AG04449 (cell line): ENCODE measurements at regions of chr6 and their contacts with region 1.

Region 1: DNA sequence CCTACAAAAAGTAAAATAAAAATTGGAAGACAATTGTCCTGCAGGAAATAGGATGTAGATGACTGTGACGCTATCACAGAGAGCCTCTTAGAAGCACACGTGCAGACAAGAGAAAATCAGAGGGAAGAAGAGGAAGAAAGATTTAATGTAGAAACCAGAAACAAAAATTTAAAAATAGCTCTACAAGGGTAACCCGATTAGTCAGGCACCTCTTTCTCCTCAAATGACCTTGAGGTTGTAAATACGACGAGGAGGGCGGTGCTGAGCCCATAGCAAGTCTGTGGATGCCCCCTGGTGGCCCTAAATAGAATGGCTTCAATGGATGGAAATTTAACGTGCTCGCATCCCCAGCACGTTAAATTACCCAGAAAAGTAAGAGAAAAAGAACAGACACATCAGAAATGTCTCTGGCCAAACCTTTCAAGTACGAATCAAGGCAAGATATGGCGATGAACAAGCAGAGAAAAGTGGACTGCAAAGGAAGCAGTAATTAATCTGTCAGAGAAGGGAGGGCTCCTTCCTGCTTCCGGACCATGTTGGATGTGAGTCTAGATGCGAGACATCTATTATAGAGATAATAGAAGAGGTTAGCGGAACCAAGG is 4.2 kb upstream of the PRPH2 start:
- DNase-seq: peak; percentile 52
- H3K4me3 ChIP-seq: peak overlapping the region; percentile 34
- CTCF ChIP-seq: peak; percentile 81

Region 2: GRCh38 chr6:42674780-42675179 is 51.8 kb before region 1 on chr6:
- CTCF ChIA-PET with region 1: interaction called, 34 read pairs
- POLR2A ChIA-PET with region 1: no interaction called
- DNase-seq: no peak
- H3K4me3 ChIP-seq: no peak overlapping the region
- CTCF ChIP-seq: no peak

Region 3: GRCh38 chr6:42692137-42692911 is 34.3 kb before region 1 on chr6:
- CTCF ChIA-PET with region 1: interaction called, 83 read pairs
- POLR2A ChIA-PET with region 1: no interaction called
- DNase-seq: no peak
- H3K4me3 ChIP-seq: no peak overlapping the region
- CTCF ChIP-seq: no peak

Region 4: GRCh38 chr6:42714098-42714761 is 12.4 kb before region 1 on chr6:
- CTCF ChIA-PET with region 1: interaction called, 41 read pairs
- POLR2A ChIA-PET with region 1: no interaction called
- DNase-seq: no peak
- H3K4me3 ChIP-seq: no peak overlapping the region
- CTCF ChIP-seq: no peak

Region 5: DNA sequence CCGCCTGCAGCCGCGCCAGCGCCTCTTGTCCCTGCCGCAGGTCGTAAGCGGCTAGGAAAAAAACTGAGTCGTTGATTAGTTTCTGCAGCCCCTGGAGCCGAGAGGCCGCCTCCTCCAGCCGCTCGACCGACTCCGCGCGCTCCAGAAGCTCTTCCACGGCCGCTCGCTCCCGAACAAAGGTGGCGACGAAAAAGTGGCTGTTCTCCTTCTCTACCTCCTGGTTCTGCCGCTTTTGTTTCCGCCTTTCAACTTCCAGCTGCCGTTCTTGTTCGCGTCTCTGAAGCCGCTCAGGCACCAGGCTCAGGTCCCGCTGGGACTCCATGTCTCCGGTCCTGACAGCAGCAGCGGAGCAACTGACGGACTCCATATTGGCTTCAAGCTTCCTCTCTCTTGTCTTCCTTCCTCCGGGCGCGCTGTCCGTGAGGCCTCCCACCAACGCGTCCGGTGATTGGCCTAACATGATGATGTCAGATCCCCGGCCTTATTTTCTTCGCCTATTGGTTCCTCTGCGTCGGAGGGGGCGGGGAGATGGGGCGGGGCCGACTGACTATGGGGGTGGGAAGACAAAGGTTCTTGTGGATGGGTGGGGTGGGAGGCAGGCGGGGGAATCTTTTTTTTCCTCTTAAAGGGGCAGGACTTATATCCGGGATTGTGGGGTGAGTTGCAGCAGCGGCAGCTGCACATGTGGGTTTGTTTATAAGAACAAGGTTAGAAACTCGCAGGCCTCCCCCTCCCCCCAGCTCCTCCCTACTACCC is 19.3 kb after region 1 on chr6 and contains the start of gene TBCC:
- CTCF ChIA-PET with region 1: interaction called, 25 read pairs
- POLR2A ChIA-PET with region 1: interaction called, 5 read pairs
- DNase-seq: peak; percentile 95
- H3K4me3 ChIP-seq: peak within 1 kb of the TSS; percentile 99
- CTCF ChIP-seq: no peak

Region 6: GRCh38 chr6:42873313-42873712 is 146.7 kb after region 1 on chr6:
- CTCF ChIA-PET with region 1: interaction called, 34 read pairs
- POLR2A ChIA-PET with region 1: no interaction called
- DNase-seq: no peak
- H3K4me3 ChIP-seq: no peak overlapping the region
- CTCF ChIP-seq: no peak

Region 7: DNA sequence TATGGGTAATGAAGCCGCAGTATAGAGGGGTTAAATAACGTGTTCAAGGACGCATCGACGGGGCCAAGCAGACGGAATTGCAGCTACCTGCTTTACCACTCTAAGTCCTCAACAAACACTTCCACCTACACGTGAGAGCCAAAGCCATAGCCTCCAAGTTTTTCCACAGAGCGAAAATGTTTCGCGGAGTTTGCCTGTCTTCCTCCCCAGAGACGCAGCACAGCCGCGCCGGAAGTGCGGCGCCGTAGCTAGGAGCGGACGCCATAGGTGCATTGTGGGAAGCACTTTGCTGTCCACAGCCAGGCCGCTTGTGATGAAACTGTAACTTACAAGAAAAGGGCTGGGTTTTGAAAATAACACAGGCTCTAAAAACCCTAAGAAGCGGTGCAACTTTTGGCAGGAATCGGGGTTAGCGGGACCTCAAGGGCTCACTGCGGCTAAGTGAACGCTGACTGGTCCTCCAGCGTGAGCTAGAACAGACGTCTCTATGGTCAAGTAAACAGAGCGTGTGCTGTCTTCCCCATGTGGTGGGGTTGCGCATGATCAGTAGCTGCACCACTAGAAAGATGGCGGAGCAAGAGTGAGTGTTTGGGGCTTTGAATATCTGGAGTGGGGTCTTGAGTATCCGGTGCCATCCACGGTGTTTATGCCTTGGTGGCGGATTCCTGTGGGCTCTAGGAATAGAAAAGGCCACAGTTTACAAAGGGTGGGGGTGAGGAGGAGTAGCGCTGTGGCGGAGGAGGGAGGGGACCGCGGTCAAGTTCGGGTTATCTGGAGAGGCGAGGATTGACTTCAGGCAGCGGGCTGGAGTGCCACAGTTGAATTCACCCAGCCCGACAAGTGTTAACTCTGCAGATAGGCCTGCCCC is 153.0 kb after region 1 on chr6 and contains the start of gene RPL7L1:
- CTCF ChIA-PET with region 1: interaction called, 34 read pairs
- POLR2A ChIA-PET with region 1: interaction called, 3 read pairs
- DNase-seq: peak; percentile 38
- H3K4me3 ChIP-seq: peak within 1 kb of the TSS; percentile 83
- CTCF ChIP-seq: peak; percentile 1

Region 8: DNA sequence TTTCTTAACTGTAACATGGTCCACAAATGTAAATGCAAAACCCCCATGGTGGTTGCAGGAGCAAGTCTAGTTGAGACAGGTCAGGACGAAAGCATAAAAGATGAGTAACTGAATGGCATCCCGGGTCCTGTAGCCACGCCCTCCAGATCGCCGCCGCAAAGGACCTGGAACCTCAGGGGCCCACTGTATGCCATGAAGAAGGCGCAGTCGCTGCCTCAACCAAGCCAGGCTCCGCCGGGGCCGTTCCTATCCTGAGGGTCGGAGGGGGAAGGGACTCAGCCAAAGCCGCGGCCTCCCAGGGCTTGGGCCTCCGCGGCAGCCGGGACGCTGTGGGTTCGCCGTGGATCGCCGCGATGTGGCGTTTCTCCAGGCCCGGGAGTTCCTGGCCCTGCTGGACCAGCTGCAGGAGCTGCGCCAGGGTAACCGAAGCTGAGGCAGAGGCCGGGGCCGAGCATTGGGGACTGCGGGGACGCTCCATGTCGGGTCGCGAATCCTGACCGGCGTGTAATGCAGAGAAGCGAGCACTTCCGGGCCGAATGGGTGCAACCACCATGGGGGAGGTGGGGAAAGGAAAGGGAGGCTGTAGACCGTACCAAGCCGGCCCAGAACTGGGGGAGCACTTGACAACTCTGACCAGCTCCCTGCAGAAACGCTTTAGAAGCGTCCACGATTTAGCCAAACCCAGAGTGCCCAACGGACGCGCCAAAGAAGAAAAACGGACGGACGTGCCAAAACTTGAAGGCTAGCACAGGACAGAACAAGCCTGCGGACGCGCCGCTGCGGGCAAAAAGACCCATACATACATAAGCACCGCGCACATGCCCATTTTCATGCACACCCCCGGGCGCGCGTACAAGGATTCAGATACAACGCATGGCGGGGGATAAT is 164.0 kb after region 1 on chr6:
- CTCF ChIA-PET with region 1: no interaction called
- POLR2A ChIA-PET with region 1: no interaction called
- DNase-seq: peak; percentile 90
- H3K4me3 ChIP-seq: peak overlapping the region; percentile 99
- CTCF ChIP-seq: no peak